ENCODE measurements at regions of chr5 and their contacts with region 1.

Region 1: GRCh38 chr5:6732634-6733410 is 19.6 kb downstream of the TENT4A start:
- DNase-seq: peak; percentile 79
- ATAC-seq: peak; percentile 51
- H3K4me3 ChIP-seq: peak overlapping the region; percentile 5; the same call in 1 of the 2 replicates
- H3K27ac ChIP-seq: peak overlapping the region; percentile 96
- H3K4me1 ChIP-seq: peaks cover 45% of the 10 kb centered on the region
- H3K27me3 ChIP-seq: no peaks in the 10 kb centered on the region
- CTCF ChIP-seq: no peak
- POLR2A ChIP-seq: 0 out of 2 replicates have a peak, but pooled peaks have one; percentile 43
- RAD21 ChIP-seq: no peak

Region 2: GRCh38 chr5:5533927-5534326 is 1198.9 kb before region 1 on chr5:
- CTCF ChIA-PET with region 1: no interaction called
- POLR2A ChIA-PET with region 1: no interaction called
- dilution Hi-C with region 1: no loop called
- in situ Hi-C with region 1: no loop called
- intact Hi-C with region 1: no loop called
- DNase-seq: no peak
- ATAC-seq: no peak
- H3K4me3 ChIP-seq: no peak overlapping the region
- H3K27ac ChIP-seq: no peak overlapping the region
- H3K4me1 ChIP-seq: no peaks in the 10 kb centered on the region
- H3K27me3 ChIP-seq: no peaks in the 10 kb centered on the region
- CTCF ChIP-seq: no peak
- POLR2A ChIP-seq: no peak
- RAD21 ChIP-seq: no peak

Region 3: GRCh38 chr5:6632917-6633468 is 99.8 kb before region 1 on chr5 and contains the starts of genes NSUN2 and SRD5A1:
- CTCF ChIA-PET with region 1: no interaction called
- POLR2A ChIA-PET with region 1: no interaction called
- dilution Hi-C with region 1: no loop called
- in situ Hi-C with region 1: no loop called
- intact Hi-C with region 1: loop called (anchors 5 kb)
- DNase-seq: peak; percentile 89
- ATAC-seq: peak; percentile 94
- H3K4me3 ChIP-seq: peak within 1 kb of the TSS; percentile 89
- H3K27ac ChIP-seq: peak within 1 kb of the TSS; percentile 92
- H3K4me1 ChIP-seq: peaks cover 11% of the 10 kb centered on the region
- H3K27me3 ChIP-seq: no peaks in the 10 kb centered on the region
- CTCF ChIP-seq: no peak
- POLR2A ChIP-seq: peak; percentile 78
- RAD21 ChIP-seq: no peak
- total RNA-seq, gene NSUN2: 51.1 and 55.5 TPM in 2 replicates
- total RNA-seq, gene SRD5A1: 6.3 and 9.7 TPM in 2 replicates

Region 4: DNA sequence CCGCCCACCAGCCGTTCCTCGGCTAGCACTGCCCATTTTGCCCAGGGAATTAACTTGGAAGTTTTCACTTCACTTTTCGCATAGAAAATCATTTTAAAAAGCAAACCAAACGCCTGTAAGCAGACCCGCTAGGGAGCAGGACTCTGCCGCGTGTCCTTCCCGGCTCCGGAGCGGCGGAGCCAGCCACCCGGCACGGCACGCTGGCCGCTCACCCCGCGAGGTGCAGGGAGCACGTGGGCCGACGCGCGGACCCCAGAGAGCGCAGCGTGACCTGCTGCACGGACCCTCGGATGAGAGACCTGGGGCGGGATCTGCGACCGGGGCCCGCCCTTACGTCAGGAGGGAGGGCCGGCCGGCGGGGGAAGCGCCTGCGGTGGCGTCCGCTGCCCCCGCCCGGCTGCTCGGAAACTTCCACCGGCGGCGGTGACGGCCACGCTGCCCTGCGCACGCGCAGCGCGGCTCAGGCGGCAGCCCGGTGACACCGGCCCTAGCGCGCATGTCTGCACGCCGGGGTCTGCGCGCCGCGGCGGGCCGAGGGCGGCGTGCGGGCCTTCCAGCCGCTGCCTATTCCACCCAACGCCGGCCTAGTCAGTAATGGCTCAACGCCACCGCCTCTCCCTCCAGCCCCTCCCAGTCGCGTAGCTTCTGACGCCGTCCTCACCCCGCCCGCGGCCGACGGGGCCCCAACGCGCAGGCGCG is 20.1 kb before region 1 on chr5:
- CTCF ChIA-PET with region 1: no interaction called
- POLR2A ChIA-PET with region 1: no interaction called
- dilution Hi-C with region 1: no loop called
- in situ Hi-C with region 1: no loop called
- intact Hi-C with region 1: loop called (anchors 2 kb)
- DNase-seq: peak; percentile 94
- ATAC-seq: peak; percentile 79
- H3K4me3 ChIP-seq: peak overlapping the region; percentile 78
- H3K27ac ChIP-seq: peak overlapping the region; percentile 88
- H3K4me1 ChIP-seq: peaks cover 19% of the 10 kb centered on the region
- H3K27me3 ChIP-seq: no peaks in the 10 kb centered on the region
- CTCF ChIP-seq: no peak
- POLR2A ChIP-seq: peak; percentile 74
- RAD21 ChIP-seq: no peak

Region 5: DNA sequence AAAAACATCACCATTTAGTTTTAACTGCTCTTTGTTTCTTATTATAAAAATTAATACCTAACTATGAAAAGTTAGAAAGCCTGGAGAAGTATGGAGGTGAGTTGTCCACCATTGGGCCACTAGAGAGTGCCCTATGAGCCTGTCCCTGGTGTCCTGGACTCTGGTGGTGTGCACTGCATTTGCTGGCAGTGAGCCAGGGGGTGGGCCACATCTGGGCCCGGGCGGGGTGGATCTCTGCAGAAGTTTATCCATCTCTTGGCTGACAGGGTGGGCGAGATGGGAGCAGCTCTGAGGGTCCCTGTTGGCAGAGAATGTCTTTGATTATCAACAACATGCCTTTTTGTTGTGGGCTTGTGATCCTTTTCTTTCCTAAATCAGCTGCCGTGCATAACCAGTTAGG is 11.4 kb before region 1 on chr5:
- CTCF ChIA-PET with region 1: interaction called, 4 read pairs
- POLR2A ChIA-PET with region 1: interaction called, 3 read pairs
- dilution Hi-C with region 1: no loop called
- in situ Hi-C with region 1: no loop called
- intact Hi-C with region 1: loop called (anchors 1 kb)
- DNase-seq: no peak
- ATAC-seq: no peak
- H3K4me3 ChIP-seq: no peak overlapping the region
- H3K27ac ChIP-seq: peak overlapping the region; percentile 22; the same call in 1 of the 2 replicates
- H3K4me1 ChIP-seq: peaks cover 43% of the 10 kb centered on the region
- H3K27me3 ChIP-seq: no peaks in the 10 kb centered on the region
- CTCF ChIP-seq: no peak
- POLR2A ChIP-seq: no peak
- RAD21 ChIP-seq: no peak

Region 6: GRCh38 chr5:6837519-6838110 is 104.8 kb after region 1 on chr5:
- CTCF ChIA-PET with region 1: no interaction called
- POLR2A ChIA-PET with region 1: no interaction called
- dilution Hi-C with region 1: no loop called
- in situ Hi-C with region 1: no loop called
- intact Hi-C with region 1: no loop called
- DNase-seq: no peak
- ATAC-seq: no peak; the same call in 1 of the 2 replicates
- H3K4me3 ChIP-seq: no peak overlapping the region
- H3K27ac ChIP-seq: no peak overlapping the region
- H3K4me1 ChIP-seq: no peaks in the 10 kb centered on the region
- H3K27me3 ChIP-seq: no peaks in the 10 kb centered on the region
- CTCF ChIP-seq: peak; percentile 59
- POLR2A ChIP-seq: no peak
- RAD21 ChIP-seq: peak; percentile 55

Region 7: DNA sequence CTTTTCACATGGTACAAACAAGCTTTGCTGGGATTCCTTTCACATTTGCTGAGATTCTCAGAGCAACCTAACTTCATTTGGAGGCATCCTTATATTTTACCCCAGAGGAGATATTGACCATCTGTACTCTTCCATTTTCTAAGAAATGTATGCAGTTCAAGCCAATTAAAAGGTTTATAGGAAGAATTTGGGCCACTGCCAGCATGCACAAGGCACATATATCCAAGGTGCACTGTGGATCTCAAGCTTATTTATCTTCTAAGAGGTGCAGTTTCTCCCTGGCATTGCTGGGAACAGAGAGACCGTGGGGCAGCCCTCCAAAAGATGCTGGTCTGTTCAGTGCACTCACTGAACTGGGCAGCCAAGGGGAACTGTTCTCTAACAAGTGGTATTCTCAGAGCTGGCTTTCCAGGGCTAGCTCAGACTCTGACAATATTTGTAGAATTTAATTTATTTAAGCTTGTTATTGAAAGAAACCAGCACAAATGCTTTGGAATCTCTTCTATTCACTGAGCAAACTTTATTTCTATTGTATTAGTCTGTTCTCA is 193.7 kb after region 1 on chr5:
- CTCF ChIA-PET with region 1: no interaction called
- POLR2A ChIA-PET with region 1: no interaction called
- dilution Hi-C with region 1: no loop called
- in situ Hi-C with region 1: no loop called
- intact Hi-C with region 1: no loop called
- DNase-seq: no peak
- ATAC-seq: no peak
- H3K4me3 ChIP-seq: no peak overlapping the region
- H3K27ac ChIP-seq: no peak overlapping the region
- H3K4me1 ChIP-seq: no peaks in the 10 kb centered on the region
- H3K27me3 ChIP-seq: no peaks in the 10 kb centered on the region
- CTCF ChIP-seq: no peak
- POLR2A ChIP-seq: no peak
- RAD21 ChIP-seq: no peak